Panc1 (cell line): ENCODE measurements at regions of chr1 and their contacts with region 1.

Region 1: DNA sequence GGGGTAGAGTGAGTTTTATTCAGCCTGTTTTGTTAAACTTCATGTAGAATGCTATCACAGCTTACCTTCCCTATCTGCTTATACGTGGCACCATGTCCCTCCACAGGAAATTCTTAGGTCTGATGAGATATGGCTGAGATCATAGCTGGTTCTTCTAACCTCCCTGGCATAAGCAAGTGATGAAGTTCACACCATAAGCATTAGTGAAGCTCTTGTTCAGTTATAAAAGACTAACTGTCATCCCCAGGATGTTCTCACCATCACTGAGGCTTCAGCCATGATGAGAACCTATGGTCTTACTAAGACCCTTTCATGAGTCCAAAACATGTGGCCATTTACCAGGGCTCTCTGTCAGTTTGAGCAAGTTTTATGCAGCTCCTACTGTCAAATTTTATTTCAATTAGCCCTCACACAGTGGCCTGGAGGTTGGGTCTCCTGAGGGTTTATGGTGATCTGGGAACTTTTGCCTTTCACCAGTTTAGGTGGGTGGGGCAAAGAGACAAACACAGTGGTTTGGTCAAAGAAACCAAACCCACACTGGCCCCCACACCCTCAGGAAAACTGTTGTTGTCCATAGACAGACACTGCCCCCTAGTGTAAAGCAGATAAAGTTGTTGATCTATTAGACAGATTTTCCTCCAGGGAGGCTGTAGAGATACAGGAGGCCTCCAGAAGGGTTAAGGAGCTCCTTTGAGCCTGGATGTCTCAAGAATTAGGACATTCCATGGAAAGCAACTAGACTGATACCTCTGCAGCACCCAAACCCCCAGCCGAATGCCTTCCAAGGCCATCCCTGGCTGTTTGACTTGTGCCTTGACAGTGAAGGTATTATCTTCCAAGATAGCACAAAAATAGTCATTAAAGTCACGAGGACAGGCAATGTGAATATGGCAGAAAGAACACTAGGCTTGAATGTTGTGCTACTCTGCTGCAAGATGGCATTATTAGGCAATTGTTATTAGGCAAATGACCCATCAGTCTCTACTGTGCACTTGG is 5.0 kb downstream of the SLC22A15 start:
- DNase-seq: peak; percentile 28
- ATAC-seq: no peak
- H3K4me3 ChIP-seq: no peak overlapping the region
- H3K27ac ChIP-seq: no peak overlapping the region
- H3K4me1 ChIP-seq: no peaks in the 10 kb centered on the region
- H3K27me3 ChIP-seq: peaks cover 4% of the 10 kb centered on the region
- CTCF ChIP-seq: peak; percentile 72

Region 2: GRCh38 chr1:115624859-115625258 is 356.4 kb before region 1 on chr1:
- CTCF ChIA-PET with region 1: no interaction called
- POLR2A ChIA-PET with region 1: no interaction called
- in situ Hi-C with region 1: no loop called
- intact Hi-C with region 1: no loop called
- DNase-seq: no peak
- ATAC-seq: no peak
- H3K4me3 ChIP-seq: no peak overlapping the region
- H3K27ac ChIP-seq: no peak overlapping the region
- H3K4me1 ChIP-seq: no peaks in the 10 kb centered on the region
- H3K27me3 ChIP-seq: no peaks in the 10 kb centered on the region
- CTCF ChIP-seq: 0 out of 2 replicates have a peak, but pooled peaks have one; percentile 16

Region 3: GRCh38 chr1:115807723-115808122 is 173.6 kb before region 1 on chr1:
- CTCF ChIA-PET with region 1: no interaction called
- POLR2A ChIA-PET with region 1: no interaction called
- in situ Hi-C with region 1: no loop called
- intact Hi-C with region 1: loop called (anchors 10 kb)
- DNase-seq: peak; percentile 15
- ATAC-seq: no peak
- H3K4me3 ChIP-seq: no peak overlapping the region
- H3K27ac ChIP-seq: no peak overlapping the region
- H3K4me1 ChIP-seq: no peaks in the 10 kb centered on the region
- H3K27me3 ChIP-seq: no peaks in the 10 kb centered on the region
- CTCF ChIP-seq: peak; percentile 63